OCI-LY7 (cell line): ENCODE measurements at regions of chr11 and their contacts with region 1.

Region 1: DNA sequence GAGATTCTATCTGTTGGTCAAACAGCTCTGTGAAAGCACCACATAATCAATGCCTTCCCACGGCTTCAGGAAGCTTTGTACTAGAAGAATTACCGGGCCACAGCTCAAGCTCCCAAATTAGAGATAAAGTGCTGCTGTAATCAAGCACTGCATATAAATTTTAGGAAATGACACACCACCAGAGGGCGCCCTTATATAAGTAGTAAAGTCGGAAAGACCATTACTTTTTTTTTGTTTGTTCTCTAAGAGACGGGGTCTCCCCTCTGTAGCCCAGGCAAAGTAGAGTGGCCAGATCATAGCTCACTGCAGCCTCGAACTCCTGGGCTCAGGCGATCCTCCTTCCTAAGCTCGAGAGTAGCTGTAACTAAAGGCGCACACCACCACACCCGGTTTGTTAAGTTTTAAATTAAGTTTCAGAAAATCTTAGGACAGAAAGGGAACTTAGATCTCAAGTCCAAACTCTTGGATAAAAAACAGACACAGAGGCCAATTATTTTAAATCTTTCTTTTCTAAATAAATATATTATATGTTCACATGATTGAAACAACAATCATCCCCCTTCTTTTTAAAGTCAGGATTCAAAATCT is 32.6 kb downstream of the PRCP start:
- DNase-seq: peak; percentile 92
- H3K4me3 ChIP-seq: no peak overlapping the region
- H3K27ac ChIP-seq: no peak overlapping the region
- H3K4me1 ChIP-seq: peaks cover 9% of the 10 kb centered on the region
- CTCF ChIP-seq: peak; percentile 93

Region 2: GRCh38 chr11:82718307-82718706 is 149.3 kb before region 1 on chr11:
- CTCF ChIA-PET with region 1: no interaction called
- POLR2A ChIA-PET with region 1: no interaction called
- intact Hi-C with region 1: loop called (anchors 1 kb)
- DNase-seq: peak; percentile 41
- H3K4me3 ChIP-seq: no peak overlapping the region
- H3K27ac ChIP-seq: no peak overlapping the region
- H3K4me1 ChIP-seq: no peaks in the 10 kb centered on the region
- CTCF ChIP-seq: peak; percentile 89

Region 3: GRCh38 chr11:82775736-82776346 is 91.7 kb before region 1 on chr11:
- CTCF ChIA-PET with region 1: no interaction called
- POLR2A ChIA-PET with region 1: no interaction called
- intact Hi-C with region 1: loop called (anchors 1 kb)
- DNase-seq: peak; percentile 51
- H3K4me3 ChIP-seq: no peak overlapping the region
- H3K27ac ChIP-seq: no peak overlapping the region
- H3K4me1 ChIP-seq: no peaks in the 10 kb centered on the region
- CTCF ChIP-seq: peak; percentile 86

Region 4: DNA sequence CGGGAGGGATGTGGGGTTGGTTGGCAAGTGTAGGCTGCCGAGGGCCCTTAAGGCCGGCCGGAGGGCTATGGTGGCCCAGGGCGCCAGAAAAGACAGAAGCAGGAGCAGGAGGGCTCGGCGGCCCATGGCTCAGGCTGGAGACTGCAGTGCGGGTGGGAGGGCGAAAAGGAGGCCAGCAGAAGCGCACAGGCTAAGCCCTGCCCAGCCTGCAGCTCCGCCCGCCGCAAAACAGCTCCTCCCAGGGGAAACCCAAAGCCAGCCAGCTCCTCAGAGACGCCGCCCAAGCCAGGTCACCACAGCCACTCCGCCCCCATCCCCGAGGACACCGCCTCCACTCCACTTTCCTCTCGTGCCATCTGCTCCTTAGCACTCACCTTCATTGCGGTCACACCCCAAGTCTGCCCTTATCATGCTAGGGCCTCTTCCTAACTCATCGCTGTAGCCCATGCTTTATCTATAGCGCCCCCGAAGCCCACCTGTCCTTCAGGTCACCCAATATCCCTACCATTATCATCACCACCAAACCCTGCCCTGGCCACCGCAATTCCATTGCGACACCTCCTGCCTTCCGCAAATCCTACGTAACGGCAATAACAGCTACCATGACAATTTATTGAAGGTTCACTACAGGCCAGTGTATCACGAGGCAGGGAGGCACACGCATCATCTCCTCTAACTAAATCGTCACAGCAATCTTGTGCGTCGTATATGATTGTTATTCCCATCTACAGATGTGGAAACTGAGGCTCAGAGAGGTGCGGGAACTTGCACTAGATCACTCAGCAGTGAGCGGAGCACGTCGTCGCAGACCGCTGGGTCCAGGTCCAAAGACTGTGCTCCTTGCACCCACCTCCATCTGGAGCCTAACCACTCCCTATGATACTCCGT is 32.9 kb after region 1 on chr11 and contains the start of gene PRCP:
- CTCF ChIA-PET with region 1: interaction called, 5 read pairs
- POLR2A ChIA-PET with region 1: interaction called, 6 read pairs
- intact Hi-C with region 1: loop called (anchors 1 kb)
- DNase-seq: peak; percentile 89
- H3K4me3 ChIP-seq: peak within 1 kb of the TSS; percentile 79
- H3K27ac ChIP-seq: peak within 1 kb of the TSS; percentile 67
- H3K4me1 ChIP-seq: peaks cover 55% of the 10 kb centered on the region
- CTCF ChIP-seq: peak; percentile 48
- total RNA-seq, gene PRCP: 6.5 and 11.0 TPM in 2 replicates

Region 5: GRCh38 chr11:83054001-83054400 is 186.4 kb after region 1 on chr11:
- CTCF ChIA-PET with region 1: no interaction called
- POLR2A ChIA-PET with region 1: no interaction called
- intact Hi-C with region 1: no loop called
- DNase-seq: peak; percentile 72
- H3K4me3 ChIP-seq: peak overlapping the region; percentile 16
- H3K27ac ChIP-seq: no peak overlapping the region
- H3K4me1 ChIP-seq: peaks cover 61% of the 10 kb centered on the region
- CTCF ChIP-seq: no peak

Region 6: DNA sequence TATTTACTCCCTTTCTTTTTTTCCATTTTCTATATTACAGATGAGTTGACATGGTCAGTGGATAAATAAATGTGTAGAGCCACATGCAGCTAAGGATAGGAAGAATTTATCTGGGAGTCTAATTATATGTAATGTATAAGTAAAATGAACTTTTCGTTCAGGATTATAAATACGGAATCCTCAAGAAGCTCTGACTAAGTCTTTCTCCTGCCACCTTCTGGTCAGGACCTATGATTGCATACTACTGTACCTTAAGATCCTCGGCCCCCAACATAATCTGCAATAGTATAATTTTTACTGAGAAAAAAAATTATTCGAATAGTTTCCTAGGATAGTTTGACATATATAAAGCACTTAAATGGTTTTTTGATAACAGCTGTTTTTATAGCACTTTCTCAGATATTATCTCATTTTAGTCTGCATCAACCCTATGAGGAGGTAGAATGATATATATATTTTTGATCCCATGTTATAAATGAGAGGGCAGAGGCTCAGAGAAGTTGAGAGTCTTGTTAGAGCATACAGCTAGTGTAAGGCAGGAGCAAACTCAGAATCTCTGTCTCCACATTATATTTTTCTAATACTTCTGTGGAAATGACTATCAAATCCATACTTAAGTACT is 382.5 kb after region 1 on chr11:
- CTCF ChIA-PET with region 1: interaction called, 6 read pairs
- POLR2A ChIA-PET with region 1: interaction called, 8 read pairs
- intact Hi-C with region 1: loop called (anchors 1 kb)
- DNase-seq: peak; percentile 73
- H3K4me3 ChIP-seq: no peak overlapping the region
- H3K27ac ChIP-seq: no peak overlapping the region
- H3K4me1 ChIP-seq: peaks cover 10% of the 10 kb centered on the region
- CTCF ChIP-seq: peak; percentile 96

Region 7: DNA sequence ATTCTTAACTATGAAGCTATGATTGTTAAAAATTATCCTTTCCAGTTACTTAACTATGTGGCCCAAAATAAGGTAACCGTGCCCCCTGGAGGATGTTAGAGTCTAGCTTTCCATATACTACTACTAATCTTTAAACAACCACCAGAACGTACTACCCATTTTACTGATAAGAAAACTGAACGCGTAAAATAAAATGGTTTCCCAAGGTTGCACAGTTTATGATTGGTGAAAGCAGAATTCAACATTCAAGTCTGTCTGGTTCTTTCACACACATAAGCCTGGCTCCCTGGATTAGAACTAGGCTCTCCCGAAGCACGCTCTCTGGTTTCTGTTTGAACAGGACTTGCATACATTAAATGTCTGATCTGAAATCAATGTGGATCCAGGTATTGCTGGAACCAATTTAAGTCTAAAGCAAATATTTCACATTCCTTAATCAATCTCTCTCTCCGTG is 856.4 kb after region 1 on chr11:
- CTCF ChIA-PET with region 1: no interaction called
- POLR2A ChIA-PET with region 1: no interaction called
- intact Hi-C with region 1: loop called (anchors 10 kb)
- DNase-seq: peak; percentile 47
- H3K4me3 ChIP-seq: peak overlapping the region; percentile 15
- H3K27ac ChIP-seq: no peak overlapping the region
- H3K4me1 ChIP-seq: no peaks in the 10 kb centered on the region
- CTCF ChIP-seq: peak; percentile 71

Region 8: GRCh38 chr11:83819933-83820549 is 952.5 kb after region 1 on chr11:
- CTCF ChIA-PET with region 1: no interaction called
- POLR2A ChIA-PET with region 1: no interaction called
- intact Hi-C with region 1: loop called (anchors 5 kb)
- DNase-seq: peak; percentile 49
- H3K4me3 ChIP-seq: no peak overlapping the region
- H3K27ac ChIP-seq: no peak overlapping the region
- H3K4me1 ChIP-seq: no peaks in the 10 kb centered on the region
- CTCF ChIP-seq: peak; percentile 82